CD14-positive monocyte (primary cell): ENCODE measurements at regions of chr12 and their contacts with region 1.

Region 1: DNA sequence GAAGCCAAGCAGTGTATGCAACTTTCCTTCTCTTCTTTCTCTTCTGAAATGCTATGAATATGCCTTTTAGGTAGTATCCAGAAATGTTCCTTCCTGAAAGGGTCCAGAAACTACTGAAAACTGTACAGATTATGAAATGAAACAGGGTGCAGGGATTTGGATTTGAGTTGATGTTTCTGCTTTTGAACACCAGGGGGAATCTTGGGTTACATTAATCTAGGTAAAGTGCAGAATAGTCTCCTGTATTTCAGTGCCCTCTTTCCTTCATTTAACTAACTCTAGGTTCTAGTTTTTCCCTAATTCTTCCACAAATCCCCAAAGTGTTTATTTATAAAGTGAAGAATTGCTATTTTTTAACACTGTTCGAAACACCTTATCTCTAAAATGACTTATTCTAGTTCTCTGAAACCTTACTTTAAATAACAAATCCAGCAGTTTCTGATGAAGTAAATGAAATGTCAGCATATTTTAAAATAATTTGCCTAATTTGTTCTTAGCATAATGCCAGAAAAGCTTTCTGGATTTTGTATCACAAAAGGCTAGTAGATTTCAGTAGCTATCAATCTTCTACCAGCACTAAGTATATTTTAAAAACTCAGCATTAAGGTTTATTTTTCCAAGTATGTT is 111.9 kb downstream of the LRRK2 start:
- DNase-seq: no peak
- H3K4me3 ChIP-seq: no peak overlapping the region
- H3K4me3 Mint-ChIP-seq: no peak overlapping the region
- H3K27ac ChIP-seq: peak overlapping the region in 1 of 2 donors; percentile 12
- H3K27ac Mint-ChIP-seq: peak overlapping the region in 1 of 7 donors; percentile 42
- H3K4me1 ChIP-seq: no peaks in the 10 kb centered on the region
- H3K4me1 Mint-ChIP-seq: no peaks in the 10 kb centered on the region
- H3K27me3 ChIP-seq: no peaks in the 10 kb centered on the region
- H3K27me3 Mint-ChIP-seq: no peaks in the 10 kb centered on the region
- CTCF ChIP-seq: peak; percentile 33

Region 2: GRCh38 chr12:40286583-40286982 is 50.1 kb before region 1 on chr12:
- intact Hi-C with region 1: loop called in 1 of 2 experiments (anchors 10 kb)
- DNase-seq: no peak
- H3K4me3 ChIP-seq: no peak overlapping the region
- H3K4me3 Mint-ChIP-seq: no peak overlapping the region
- H3K27ac ChIP-seq: no peak overlapping the region
- H3K27ac Mint-ChIP-seq: no peak overlapping the region
- H3K4me1 ChIP-seq: no peaks in the 10 kb centered on the region
- H3K4me1 Mint-ChIP-seq: no peaks in the 10 kb centered on the region
- H3K27me3 ChIP-seq: no peaks in the 10 kb centered on the region
- H3K27me3 Mint-ChIP-seq: no peaks in the 10 kb centered on the region
- CTCF ChIP-seq: no peak